ENCODE measurements at regions of chr19 and their contacts with region 1.

Region 1: DNA sequence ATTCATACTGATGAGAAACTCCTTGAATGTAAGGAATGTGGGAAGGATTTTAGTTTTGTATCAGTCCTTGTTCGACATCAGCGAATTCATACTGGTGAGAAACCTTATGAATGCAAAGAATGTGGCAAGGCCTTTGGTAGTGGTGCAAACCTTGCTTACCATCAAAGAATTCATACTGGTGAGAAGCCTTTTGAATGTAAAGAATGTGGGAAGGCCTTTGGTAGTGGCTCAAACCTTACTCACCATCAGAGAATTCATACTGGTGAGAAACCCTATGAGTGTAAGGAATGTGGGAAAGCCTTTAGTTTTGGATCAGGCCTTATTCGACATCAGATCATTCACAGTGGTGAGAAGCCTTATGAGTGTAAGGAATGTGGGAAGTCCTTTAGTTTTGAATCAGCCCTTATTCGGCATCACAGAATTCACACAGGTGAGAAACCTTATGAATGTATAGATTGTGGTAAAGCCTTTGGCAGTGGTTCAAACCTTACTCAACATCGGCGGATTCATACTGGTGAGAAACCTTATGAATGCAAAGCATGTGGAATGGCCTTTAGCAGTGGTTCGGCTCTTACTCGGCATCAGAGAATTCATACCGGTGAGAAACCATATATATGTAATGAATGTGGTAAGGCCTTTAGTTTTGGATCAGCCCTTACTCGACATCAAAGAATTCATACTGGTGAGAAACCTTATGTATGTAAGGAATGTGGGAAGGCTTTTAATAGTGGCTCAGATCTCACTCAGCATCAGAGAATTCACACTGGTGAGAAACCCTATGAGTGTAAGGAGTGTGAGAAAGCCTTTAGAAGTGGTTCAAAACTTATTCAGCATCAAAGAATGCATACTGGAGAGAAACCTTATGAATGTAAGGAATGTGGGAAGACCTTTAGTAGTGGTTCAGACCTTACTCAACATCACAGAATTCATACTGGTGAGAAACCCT is 26.6 kb downstream of the ZNF345 start:
- DNase-seq: no peak
- ATAC-seq: no peak
- H3K4me3 ChIP-seq: no peak overlapping the region
- H3K27ac ChIP-seq: no peak overlapping the region
- H3K4me1 ChIP-seq: no peaks in the 10 kb centered on the region
- H3K27me3 ChIP-seq: no peaks in the 10 kb centered on the region
- CTCF ChIP-seq: no peak

Region 2: DNA sequence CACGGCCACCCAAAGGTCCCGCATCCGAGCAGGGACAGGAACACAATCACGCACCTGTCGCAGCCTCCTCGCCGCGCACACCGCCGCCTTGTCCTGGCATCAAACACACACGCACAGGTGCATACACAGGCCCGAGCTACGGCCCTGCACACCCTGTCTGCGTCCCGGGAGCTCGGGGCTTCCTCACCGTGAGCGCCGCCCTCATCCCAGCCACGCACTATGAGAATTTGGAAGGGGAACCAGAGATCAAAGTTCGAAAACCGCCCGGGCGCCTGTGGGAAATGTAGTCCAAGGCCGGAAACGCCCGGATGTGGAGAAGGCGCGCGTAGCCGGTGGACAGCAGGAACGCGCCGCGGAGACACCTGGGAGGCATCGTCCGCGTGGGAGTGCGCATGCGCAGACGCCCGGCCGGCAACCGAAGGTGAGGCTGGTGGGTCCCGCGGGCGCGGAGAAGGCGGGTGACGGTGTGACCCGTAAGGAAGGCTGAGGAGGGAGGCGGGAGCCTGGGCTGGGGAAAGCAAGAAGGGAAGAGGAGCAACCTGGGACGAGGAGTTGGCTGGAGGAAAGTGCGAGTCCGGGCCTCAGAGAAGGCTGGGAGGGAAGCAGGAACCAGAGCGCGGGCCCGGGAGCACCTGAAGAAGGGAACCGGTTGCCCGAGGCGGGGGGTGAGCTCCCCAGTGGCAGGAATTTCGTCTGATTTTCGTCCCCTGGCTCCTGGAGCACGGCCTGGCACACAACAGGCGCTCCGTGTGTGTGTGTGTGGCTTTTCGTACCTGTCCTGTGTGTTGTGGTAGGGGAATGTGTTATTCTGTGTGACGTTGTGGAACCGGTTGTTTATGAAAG is 189.8 kb before region 1 on chr19 and contains the start of gene ZNF567:
- intact Hi-C with region 1: no loop called
- DNase-seq: peak; percentile 97 to 100 (median 98)
- ATAC-seq: peak; percentile 98 to 99 (median 99)
- H3K4me3 ChIP-seq: peak within 1 kb of the TSS; percentile 73 to 89 (median 80)
- H3K27ac ChIP-seq: peak within 1 kb of the TSS; percentile 44 to 63 (median 54)
- H3K4me1 ChIP-seq: peaks cover 0 to 8% (median 3%) of the 10 kb centered on the region in 3 donors
- H3K27me3 ChIP-seq: no peaks in the 10 kb centered on the region
- CTCF ChIP-seq: no peak
- total RNA-seq, gene ZNF567: 1.4 to 4.2 (median 1.9) TPM

Region 3: DNA sequence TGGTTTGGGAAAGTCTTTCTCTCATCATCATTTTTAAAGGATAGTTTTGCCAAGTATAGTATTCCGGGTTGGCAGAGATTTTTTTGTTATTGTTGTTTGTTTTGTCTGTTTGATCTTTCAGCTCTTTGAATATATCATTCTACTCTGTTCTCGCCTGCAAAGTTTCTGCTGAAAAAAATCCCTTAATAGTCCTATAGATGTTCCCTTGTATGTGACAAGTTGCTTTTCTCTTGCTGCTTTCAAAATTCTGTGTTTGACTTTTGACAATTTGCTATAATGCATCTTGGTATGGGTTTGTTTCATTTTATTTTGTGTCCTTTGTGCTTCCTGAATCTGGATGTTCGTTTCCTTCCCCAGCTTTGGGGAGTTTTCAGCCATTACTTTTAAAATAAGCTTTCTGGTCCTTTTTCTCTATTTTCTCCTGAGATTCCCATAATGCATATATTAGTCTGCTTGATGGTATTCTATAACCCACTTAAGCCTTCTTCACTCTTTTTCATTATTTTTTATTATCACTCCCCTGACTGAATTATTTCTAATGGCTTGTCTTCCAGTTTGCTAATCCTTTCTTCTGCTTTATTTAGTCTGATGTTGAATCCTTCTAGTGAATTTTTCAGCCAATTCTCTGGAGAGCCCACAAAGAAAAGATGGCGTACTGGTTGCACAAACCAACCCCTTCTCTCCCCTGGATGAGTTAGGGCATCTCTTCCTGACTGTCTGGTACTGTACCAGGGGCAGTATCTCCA is 575.4 kb after region 1 on chr19:
- intact Hi-C with region 1: loop called in 1 of 3 experiments (anchors 10 kb)
- DNase-seq: no peak
- ATAC-seq: no peak
- H3K4me3 ChIP-seq: no peak overlapping the region
- H3K27ac ChIP-seq: no peak overlapping the region
- H3K4me1 ChIP-seq: no peaks in the 10 kb centered on the region
- H3K27me3 ChIP-seq: no peaks in the 10 kb centered on the region
- CTCF ChIP-seq: no peak

Measured in pancreas (tissue), 10 donors.